ENCODE measurements at regions of chr20 and their contacts with region 1.

Region 1: DNA sequence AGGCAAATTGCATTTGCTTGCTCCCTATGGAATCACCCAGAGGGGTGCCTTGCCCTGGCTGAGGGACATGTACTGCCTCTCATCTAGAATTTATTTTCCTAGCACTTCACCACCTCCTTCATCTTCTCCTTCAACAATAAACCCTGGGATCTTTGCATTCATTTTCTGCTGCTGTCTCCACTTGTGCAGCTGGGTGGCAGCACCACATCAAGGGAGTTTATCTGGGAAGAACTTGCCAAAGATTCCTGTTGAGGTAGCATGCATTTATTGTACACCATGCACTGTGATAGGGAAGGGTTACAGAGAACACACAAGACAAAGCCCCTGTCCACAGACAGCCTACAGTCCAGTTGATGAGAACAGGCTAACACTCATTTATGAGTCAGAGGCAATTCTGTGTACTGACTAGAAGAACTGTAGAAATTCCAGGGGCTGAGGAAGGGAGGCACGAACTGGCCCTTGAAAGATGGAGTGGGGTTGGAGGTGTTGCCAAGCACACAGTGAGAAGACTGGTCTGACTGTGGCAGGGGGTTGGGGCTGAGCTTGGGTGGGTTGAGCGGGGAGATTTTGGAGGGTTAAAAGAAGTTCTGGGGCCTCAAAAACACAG is 17.5 kb downstream of the C20orf173 start:
- DNase-seq: peak; percentile 47
- ATAC-seq: peak; percentile 46
- H3K4me3 ChIP-seq: no peak overlapping the region
- H3K27ac ChIP-seq: no peak overlapping the region
- H3K4me1 ChIP-seq: peaks cover 11% of the 10 kb centered on the region
- H3K27me3 ChIP-seq: no peaks in the 10 kb centered on the region
- CTCF ChIP-seq: peak; percentile 62
- POLR2A ChIP-seq: no peak
- RAD21 ChIP-seq: peak; percentile 71

Region 2: DNA sequence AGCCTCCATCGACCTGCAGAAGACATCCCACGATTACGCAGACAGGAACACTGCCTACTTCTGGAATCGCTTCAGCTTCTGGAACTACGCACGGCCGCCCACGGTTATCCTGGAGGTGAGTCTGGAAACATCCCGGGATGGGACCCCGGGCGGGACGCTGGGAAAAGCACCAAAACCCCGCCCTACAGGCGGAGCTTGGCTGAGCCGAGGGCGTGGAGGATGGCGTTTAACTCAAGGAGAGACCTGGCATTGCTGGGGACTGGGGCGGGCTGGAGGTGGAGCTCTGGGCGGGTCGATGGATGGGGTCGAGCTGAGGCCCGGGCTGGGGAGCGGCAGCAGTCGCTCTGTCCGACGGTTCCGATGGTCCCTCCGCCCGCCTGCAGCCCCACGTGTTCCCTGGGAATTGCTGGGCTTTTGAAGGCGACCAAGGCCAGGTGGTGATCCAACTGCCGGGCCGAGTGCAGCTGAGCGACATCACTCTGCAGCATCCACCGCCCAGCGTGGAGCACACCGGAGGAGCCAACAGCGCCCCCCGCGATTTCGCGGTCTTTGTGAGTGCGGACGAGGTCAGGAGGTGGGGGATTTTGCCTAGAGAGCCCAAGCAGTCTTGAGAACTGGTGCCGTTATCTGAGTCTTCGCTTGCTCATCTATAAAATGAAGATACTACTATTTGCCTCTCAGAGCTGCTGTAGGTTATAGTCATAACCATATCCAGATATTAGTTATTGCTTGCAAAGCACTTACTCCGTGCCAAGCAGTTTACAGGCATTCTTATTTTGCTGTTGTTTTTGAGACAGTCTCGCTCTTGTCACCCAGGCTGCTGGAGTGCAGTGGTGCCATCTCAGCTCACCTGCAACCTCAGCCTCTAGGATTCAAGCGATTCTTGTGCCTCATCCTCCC is 107.5 kb after region 1 on chr20:
- CTCF ChIA-PET with region 1: no interaction called
- POLR2A ChIA-PET with region 1: no interaction called
- dilution Hi-C with region 1: no loop called
- in situ Hi-C with region 1: no loop called
- intact Hi-C with region 1: loop called (anchors 10 kb)
- DNase-seq: peak; percentile 78
- ATAC-seq: peak; percentile 58
- H3K4me3 ChIP-seq: peak overlapping the region; percentile 73
- H3K27ac ChIP-seq: no peak overlapping the region; the same call in 1 of the 2 replicates
- H3K4me1 ChIP-seq: peaks cover 13% of the 10 kb centered on the region
- H3K27me3 ChIP-seq: no peaks in the 10 kb centered on the region
- CTCF ChIP-seq: peak; percentile 42
- POLR2A ChIP-seq: peak; percentile 38; the same call in 1 of the 2 replicates
- RAD21 ChIP-seq: peak; percentile 23; the same call in 1 of the 2 replicates

Region 3: GRCh38 chr20:35664544-35665221 is 152.8 kb after region 1 on chr20 and contains the starts of genes CPNE1 and RBM12:
- CTCF ChIA-PET with region 1: no interaction called
- POLR2A ChIA-PET with region 1: interaction called, 10 read pairs
- dilution Hi-C with region 1: no loop called
- in situ Hi-C with region 1: no loop called
- intact Hi-C with region 1: loop called (anchors 5 kb)
- DNase-seq: peak; percentile 91
- ATAC-seq: peak; percentile 90
- H3K4me3 ChIP-seq: peak within 1 kb of the TSS; percentile 86
- H3K27ac ChIP-seq: peak within 1 kb of the TSS; percentile 94
- H3K4me1 ChIP-seq: peaks cover 2% of the 10 kb centered on the region
- H3K27me3 ChIP-seq: no peaks in the 10 kb centered on the region
- CTCF ChIP-seq: no peak
- POLR2A ChIP-seq: peak; percentile 97
- RAD21 ChIP-seq: no peak; the same call in 1 of the 2 replicates
- total RNA-seq, gene CPNE1: 141 and 163 TPM in 2 replicates
- total RNA-seq, gene RBM12: 65.8 and 69.4 TPM in 2 replicates

Region 4: DNA sequence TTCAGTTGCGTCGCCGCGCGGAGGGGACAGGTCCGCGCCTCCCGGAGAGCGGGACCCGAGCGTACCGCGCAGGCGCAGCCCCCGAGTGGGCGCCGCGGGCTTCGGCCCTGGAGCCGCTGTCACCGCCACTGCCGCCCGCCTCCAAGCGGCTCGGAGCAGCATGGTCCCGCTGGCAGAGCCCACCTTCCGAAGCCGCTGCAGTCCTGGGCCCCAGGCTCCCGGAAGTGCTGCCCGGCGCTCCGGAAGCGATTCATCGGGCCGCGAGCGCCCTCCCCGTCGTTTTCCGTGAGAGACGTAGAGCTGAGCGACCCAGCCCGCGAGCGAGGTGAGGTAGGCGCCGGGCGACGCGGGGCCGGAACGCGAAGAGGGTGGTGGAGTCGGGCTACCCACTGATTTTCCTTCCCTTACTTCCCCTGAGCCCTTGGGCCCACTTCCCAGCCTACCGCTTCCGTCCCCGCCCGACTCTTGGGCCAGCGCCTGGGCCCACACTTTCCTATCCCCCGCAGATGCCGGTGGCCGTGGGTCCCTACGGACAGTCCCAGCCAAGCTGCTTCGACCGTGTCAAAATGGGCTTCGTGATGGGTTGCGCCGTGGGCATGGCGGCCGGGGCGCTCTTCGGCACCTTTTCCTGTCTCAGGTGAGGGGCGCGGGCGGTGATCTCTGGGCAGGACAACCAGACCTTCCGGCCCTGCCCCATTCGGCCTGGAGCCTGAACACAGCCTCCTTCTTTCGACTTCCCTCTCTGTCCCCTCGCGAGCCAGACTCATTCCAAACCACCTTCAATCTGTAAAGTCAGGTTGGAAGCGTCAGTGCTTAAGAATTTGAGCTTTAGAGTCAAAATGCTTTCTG is 187.4 kb after region 1 on chr20 and contains the starts of genes NFS1 and ROMO1:
- CTCF ChIA-PET with region 1: no interaction called
- POLR2A ChIA-PET with region 1: no interaction called
- dilution Hi-C with region 1: no loop called
- in situ Hi-C with region 1: no loop called
- intact Hi-C with region 1: loop called (anchors 2 kb)
- DNase-seq: peak; percentile 76
- ATAC-seq: peak; percentile 84
- H3K4me3 ChIP-seq: peak within 1 kb of the TSS; percentile 73
- H3K27ac ChIP-seq: peak within 1 kb of the TSS; percentile 77
- H3K4me1 ChIP-seq: peaks cover 5% of the 10 kb centered on the region
- H3K27me3 ChIP-seq: no peaks in the 10 kb centered on the region
- CTCF ChIP-seq: peak; percentile 34; the same call in 1 of the 2 replicates
- POLR2A ChIP-seq: peak; percentile 78
- RAD21 ChIP-seq: 0 out of 2 replicates have a peak, but pooled peaks have one; percentile 20
- total RNA-seq, gene NFS1: 11.4 and 16.5 TPM in 2 replicates
- total RNA-seq, gene ROMO1: 223 and 397 TPM in 2 replicates

Region 5: GRCh38 chr20:35901678-35902544 is 390.0 kb after region 1 on chr20:
- CTCF ChIA-PET with region 1: no interaction called
- POLR2A ChIA-PET with region 1: no interaction called
- dilution Hi-C with region 1: no loop called
- in situ Hi-C with region 1: loop called (anchors 25 kb)
- intact Hi-C with region 1: no loop called
- DNase-seq: peak; percentile 97
- ATAC-seq: peak; percentile 96
- H3K4me3 ChIP-seq: no peak overlapping the region
- H3K27ac ChIP-seq: peak overlapping the region; percentile 57
- H3K4me1 ChIP-seq: peaks cover 15% of the 10 kb centered on the region
- H3K27me3 ChIP-seq: no peaks in the 10 kb centered on the region
- CTCF ChIP-seq: no peak
- POLR2A ChIP-seq: no peak
- RAD21 ChIP-seq: no peak